Panc1 (cell line): ENCODE measurements at regions of chr3 and their contacts with region 1.

Region 1: GRCh38 chr3:148955544-148956346 is 35.6 kb upstream of the GYG1 start:
- DNase-seq: no peak
- ATAC-seq: peak; percentile 75
- H3K4me3 ChIP-seq: no peak overlapping the region
- H3K27ac ChIP-seq: peak overlapping the region; percentile 57; the same call in 1 of the 2 replicates
- H3K4me1 ChIP-seq: peaks cover 6% of the 10 kb centered on the region
- H3K27me3 ChIP-seq: no peaks in the 10 kb centered on the region
- CTCF ChIP-seq: peak; percentile 85

Region 2: DNA sequence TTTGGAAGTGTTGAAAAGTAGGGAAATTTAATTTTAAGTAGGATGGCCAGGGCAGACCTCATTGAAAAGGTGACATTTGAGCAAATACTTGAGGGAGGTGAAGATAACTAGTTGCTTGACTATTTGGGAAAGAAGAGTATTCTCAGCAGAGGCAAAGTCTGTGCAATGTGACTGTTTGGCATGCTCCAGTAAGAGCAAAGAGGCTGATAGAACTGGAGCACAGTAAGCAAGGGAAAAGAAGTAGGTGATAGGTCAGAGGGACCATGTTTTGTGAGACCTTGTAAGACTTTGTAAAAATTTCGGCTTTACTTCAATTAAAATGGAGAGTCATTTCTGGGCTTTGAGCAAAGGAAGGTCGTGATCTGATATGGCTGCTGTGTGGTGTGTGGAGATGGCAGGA is 1210.8 kb before region 1 on chr3:
- CTCF ChIA-PET with region 1: no interaction called
- POLR2A ChIA-PET with region 1: no interaction called
- in situ Hi-C with region 1: no loop called
- intact Hi-C with region 1: no loop called
- DNase-seq: no peak
- ATAC-seq: no peak
- H3K4me3 ChIP-seq: no peak overlapping the region
- H3K27ac ChIP-seq: no peak overlapping the region
- H3K4me1 ChIP-seq: no peaks in the 10 kb centered on the region
- H3K27me3 ChIP-seq: no peaks in the 10 kb centered on the region
- CTCF ChIP-seq: no peak

Region 3: DNA sequence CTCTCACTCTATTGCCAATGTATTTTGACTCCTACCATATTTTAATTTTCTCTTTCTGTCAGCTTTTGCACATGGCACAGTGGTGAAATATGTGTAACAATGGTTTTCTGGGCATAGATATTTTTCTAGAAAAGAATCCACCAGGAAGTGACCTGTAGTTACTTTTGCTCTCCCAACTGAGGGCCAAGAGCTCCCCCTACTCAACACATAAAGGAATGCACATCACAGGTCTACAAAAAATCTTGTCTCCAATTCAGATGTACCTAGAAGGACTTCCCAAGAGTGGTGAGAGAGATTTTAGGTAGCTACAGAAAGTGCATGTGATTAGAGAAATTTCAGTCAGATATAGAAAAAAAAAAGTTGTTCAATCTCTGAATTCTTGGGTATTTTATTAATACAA is 75.1 kb before region 1 on chr3:
- CTCF ChIA-PET with region 1: interaction called, 11 read pairs
- POLR2A ChIA-PET with region 1: no interaction called
- in situ Hi-C with region 1: no loop called
- intact Hi-C with region 1: no loop called
- DNase-seq: no peak
- ATAC-seq: no peak
- H3K4me3 ChIP-seq: no peak overlapping the region
- H3K27ac ChIP-seq: no peak overlapping the region
- H3K4me1 ChIP-seq: no peaks in the 10 kb centered on the region
- H3K27me3 ChIP-seq: peaks cover 9% of the 10 kb centered on the region; the same call in 1 of the 2 replicates
- CTCF ChIP-seq: peak; percentile 46; the same call in 1 of the 2 replicates

Region 4: DNA sequence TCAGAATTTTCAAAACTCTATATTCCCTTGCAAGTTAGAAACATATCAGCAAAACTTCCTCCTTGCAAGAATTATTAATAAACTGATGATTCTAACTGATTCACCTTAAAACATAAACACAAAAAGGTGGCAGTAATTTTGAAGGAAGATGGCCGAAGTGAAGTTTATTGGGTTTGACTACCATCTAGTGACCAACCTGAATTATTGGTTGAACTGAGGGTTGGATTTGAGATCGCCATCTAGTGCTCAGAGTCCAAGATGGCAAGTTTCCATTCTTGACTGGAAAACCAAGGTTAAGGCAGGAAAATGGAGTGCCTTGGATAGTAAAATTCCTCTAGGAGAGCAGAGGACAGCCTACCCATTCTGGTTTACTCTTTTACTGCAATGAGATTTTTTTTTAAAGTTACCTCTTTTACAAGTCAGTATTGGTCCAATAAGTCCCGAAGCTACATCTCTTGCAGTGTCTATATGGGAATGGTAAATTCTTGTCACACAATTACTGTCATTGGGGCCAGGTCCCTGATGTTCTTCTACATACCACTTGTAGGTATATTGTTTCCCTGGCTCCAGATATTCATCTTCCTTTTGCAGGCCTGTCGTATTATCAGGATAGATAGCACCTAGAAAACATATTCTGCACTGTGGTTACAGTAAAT is 317.5 kb after region 1 on chr3:
- CTCF ChIA-PET with region 1: interaction called, 4 read pairs
- POLR2A ChIA-PET with region 1: no interaction called
- in situ Hi-C with region 1: no loop called
- intact Hi-C with region 1: loop called (anchors 5 kb)
- DNase-seq: peak; percentile 90
- ATAC-seq: peak; percentile 77
- H3K4me3 ChIP-seq: no peak overlapping the region
- H3K27ac ChIP-seq: peak overlapping the region; percentile 91
- H3K4me1 ChIP-seq: peaks cover 19% of the 10 kb centered on the region
- H3K27me3 ChIP-seq: no peaks in the 10 kb centered on the region
- CTCF ChIP-seq: peak; percentile 95

Region 5: DNA sequence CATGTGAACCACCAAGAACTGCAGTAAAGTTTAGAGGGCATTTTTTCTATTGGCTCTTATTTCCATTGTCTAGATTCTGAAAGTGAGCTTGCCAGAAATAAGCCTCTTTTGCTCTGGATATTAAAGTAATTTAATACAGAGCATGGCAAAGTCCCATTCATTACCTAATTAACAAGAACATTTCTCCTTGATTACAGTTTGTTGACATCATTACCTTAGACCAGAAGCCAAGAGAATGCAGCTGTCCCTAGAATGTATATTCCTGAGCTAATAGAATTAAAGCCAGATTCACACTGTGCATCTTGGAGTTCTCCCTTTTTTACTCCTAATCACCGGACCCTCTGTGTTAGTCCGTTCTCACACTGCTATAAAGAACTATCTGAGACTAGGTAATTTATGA is 472.3 kb after region 1 on chr3:
- CTCF ChIA-PET with region 1: interaction called, 11 read pairs
- POLR2A ChIA-PET with region 1: no interaction called
- in situ Hi-C with region 1: no loop called
- intact Hi-C with region 1: no loop called
- DNase-seq: no peak
- ATAC-seq: no peak
- H3K4me3 ChIP-seq: no peak overlapping the region
- H3K27ac ChIP-seq: no peak overlapping the region
- H3K4me1 ChIP-seq: no peaks in the 10 kb centered on the region
- H3K27me3 ChIP-seq: no peaks in the 10 kb centered on the region
- CTCF ChIP-seq: no peak

Region 6: GRCh38 chr3:149542375-149543312 is 586.9 kb after region 1 on chr3:
- CTCF ChIA-PET with region 1: no interaction called
- POLR2A ChIA-PET with region 1: interaction called, 18 read pairs
- in situ Hi-C with region 1: no loop called
- intact Hi-C with region 1: no loop called
- DNase-seq: no peak
- ATAC-seq: peak; percentile 27
- H3K4me3 ChIP-seq: no peak overlapping the region
- H3K27ac ChIP-seq: peak overlapping the region; percentile 100
- H3K4me1 ChIP-seq: peaks cover 99% of the 10 kb centered on the region
- H3K27me3 ChIP-seq: no peaks in the 10 kb centered on the region
- CTCF ChIP-seq: no peak

Region 7: GRCh38 chr3:150049317-150049716 is 1093.6 kb after region 1 on chr3:
- CTCF ChIA-PET with region 1: no interaction called
- POLR2A ChIA-PET with region 1: no interaction called
- in situ Hi-C with region 1: no loop called
- intact Hi-C with region 1: no loop called
- DNase-seq: no peak
- ATAC-seq: no peak
- H3K4me3 ChIP-seq: no peak overlapping the region
- H3K27ac ChIP-seq: no peak overlapping the region
- H3K4me1 ChIP-seq: no peaks in the 10 kb centered on the region
- H3K27me3 ChIP-seq: no peaks in the 10 kb centered on the region
- CTCF ChIP-seq: no peak